HCT116 (cell line): ENCODE measurements at regions of chr7 and their contacts with region 1.

Region 1: DNA sequence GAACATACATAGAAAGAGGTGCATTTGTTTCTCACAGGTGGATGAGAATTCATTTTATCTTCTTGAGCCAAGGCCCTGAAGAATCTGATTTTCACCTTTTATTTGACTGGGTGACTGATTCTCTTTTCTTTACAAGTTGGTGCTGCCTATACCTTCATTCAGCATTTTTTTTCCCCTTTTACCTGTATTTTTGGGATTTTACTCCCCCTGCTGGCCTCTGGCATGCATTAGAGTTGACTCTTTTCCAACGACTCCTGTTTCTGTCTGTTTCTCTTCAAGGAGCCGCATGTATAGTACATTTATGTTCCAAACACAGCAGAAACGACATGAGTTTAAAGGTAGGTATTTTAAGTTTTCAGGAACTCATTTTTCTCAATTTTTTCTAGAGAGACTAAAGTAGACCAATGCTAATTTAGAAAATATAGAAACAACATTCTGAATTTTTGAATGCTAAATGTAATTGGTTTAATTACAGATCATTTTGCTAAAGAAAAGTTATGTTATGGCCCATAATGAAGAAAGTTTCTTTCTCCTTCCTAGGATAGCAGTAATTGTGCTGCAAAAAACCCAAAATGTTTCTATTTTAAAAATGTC is 149.8 kb upstream of the HDAC9 start:
- DNase-seq: peak; percentile 46
- ATAC-seq: peak; percentile 69
- H3K4me3 ChIP-seq: no peak overlapping the region
- H3K27ac ChIP-seq: no peak overlapping the region
- H3K4me1 ChIP-seq: no peaks in the 10 kb centered on the region; a peak in 1 of 4 replicates
- H3K27me3 ChIP-seq: no peaks in the 10 kb centered on the region
- CTCF ChIP-seq: peak; percentile 78 to 81 (median 78)
- POLR2A ChIP-seq: no peak
- RAD21 ChIP-seq: peak; percentile 82

Region 2: GRCh38 chr7:17530741-17531417 is 814.9 kb before region 1 on chr7:
- CTCF ChIA-PET with region 1: no interaction called
- POLR2A ChIA-PET with region 1: no interaction called
- RAD21 ChIA-PET with region 1: no interaction called
- intact Hi-C with region 1: no loop called
- DNase-seq: peak; percentile 26
- ATAC-seq: peak; percentile 83
- H3K4me3 ChIP-seq: no peak overlapping the region
- H3K27ac ChIP-seq: no peak overlapping the region
- H3K4me1 ChIP-seq: peaks cover 0 to 13% of the 10 kb centered on the region in 2 experiments; a peak in 1 of 4 replicates
- H3K27me3 ChIP-seq: no peaks in the 10 kb centered on the region
- CTCF ChIP-seq: peak; percentile 37 to 56 (median 49); a peak in 5 of 6 replicates
- POLR2A ChIP-seq: no peak
- RAD21 ChIP-seq: peak; percentile 77

Region 3: GRCh38 chr7:17680943-17681351 is 664.8 kb before region 1 on chr7:
- CTCF ChIA-PET with region 1: interaction called, 9 read pairs
- POLR2A ChIA-PET with region 1: no interaction called
- RAD21 ChIA-PET with region 1: no interaction called
- intact Hi-C with region 1: loop called (anchors 1 kb)
- DNase-seq: peak; percentile 12
- ATAC-seq: no peak
- H3K4me3 ChIP-seq: no peak overlapping the region
- H3K27ac ChIP-seq: no peak overlapping the region
- H3K4me1 ChIP-seq: no peaks in the 10 kb centered on the region
- H3K27me3 ChIP-seq: no peaks in the 10 kb centered on the region
- CTCF ChIP-seq: peak; percentile 2 to 66 (median 54); a peak in 3 of 6 replicates
- POLR2A ChIP-seq: no peak
- RAD21 ChIP-seq: peak; percentile 72

Region 4: GRCh38 chr7:17706734-17707133 is 639.0 kb before region 1 on chr7:
- CTCF ChIA-PET with region 1: interaction called, 19 read pairs
- POLR2A ChIA-PET with region 1: no interaction called
- RAD21 ChIA-PET with region 1: no interaction called
- intact Hi-C with region 1: loop called (anchors 1 kb)
- DNase-seq: peak; percentile 65
- ATAC-seq: peak; percentile 98
- H3K4me3 ChIP-seq: no peak overlapping the region
- H3K27ac ChIP-seq: no peak overlapping the region
- H3K4me1 ChIP-seq: no peaks in the 10 kb centered on the region
- H3K27me3 ChIP-seq: no peaks in the 10 kb centered on the region
- CTCF ChIP-seq: peak; percentile 53 to 71 (median 55)
- POLR2A ChIP-seq: no peak
- RAD21 ChIP-seq: peak; percentile 86

Region 5: GRCh38 chr7:17971411-17971810 is 374.3 kb before region 1 on chr7:
- CTCF ChIA-PET with region 1: no interaction called
- POLR2A ChIA-PET with region 1: no interaction called
- RAD21 ChIA-PET with region 1: no interaction called
- intact Hi-C with region 1: loop called (anchors 2 kb)
- DNase-seq: no peak
- ATAC-seq: no peak
- H3K4me3 ChIP-seq: no peak overlapping the region
- H3K27ac ChIP-seq: no peak overlapping the region
- H3K4me1 ChIP-seq: no peaks in the 10 kb centered on the region
- H3K27me3 ChIP-seq: no peaks in the 10 kb centered on the region
- CTCF ChIP-seq: peak in 2 of 3 experiments; percentile 12 to 23; a peak in 1 of 6 replicates
- POLR2A ChIP-seq: no peak
- RAD21 ChIP-seq: peak; percentile 56